Esophagus squamous epithelium (tissue), 5 donors: ENCODE measurements at regions of chr13 and their contacts with region 1.

Region 1: GRCh38 chr13:102580552-102581169 is 16.1 kb upstream of the TPP2 start:
- DNase-seq: no peak
- H3K4me3 ChIP-seq: no peak overlapping the region
- H3K27ac ChIP-seq: no peak overlapping the region
- H3K4me1 ChIP-seq: no peaks in the 10 kb centered on the region
- H3K27me3 ChIP-seq: peaks cover 0 to 13% (median 0%) of the 10 kb centered on the region in 4 donors
- CTCF ChIP-seq: peak; percentile 50 to 76 (median 68)
- POLR2A ChIP-seq: no peak

Region 2: DNA sequence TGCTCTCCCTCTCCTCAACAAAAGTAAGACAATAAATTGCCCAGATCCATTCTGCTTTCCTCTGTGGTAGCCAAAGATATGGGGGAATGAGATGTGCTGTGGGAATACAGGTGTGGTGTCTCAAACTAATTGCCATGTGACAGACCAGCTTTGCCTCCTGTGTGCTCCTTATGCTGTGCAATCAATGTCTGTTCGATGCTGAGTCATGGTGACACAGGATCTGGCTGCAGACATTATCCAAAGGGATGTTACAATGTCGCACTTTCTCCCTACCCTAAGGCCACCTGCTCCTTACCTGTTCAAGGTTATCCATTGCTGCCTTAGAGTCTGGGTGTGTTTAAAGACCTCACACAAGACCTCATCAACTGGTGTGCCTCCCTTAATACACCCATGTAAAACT is 211.4 kb before region 1 on chr13:
- intact Hi-C with region 1: no loop called
- DNase-seq: no peak
- H3K4me3 ChIP-seq: no peak overlapping the region
- H3K27ac ChIP-seq: peak overlapping the region in 1 of 4 donors; percentile 7
- H3K4me1 ChIP-seq: peaks cover 0 to 7% (median 0%) of the 10 kb centered on the region in 3 donors
- H3K27me3 ChIP-seq: no peaks in the 10 kb centered on the region
- CTCF ChIP-seq: no peak
- POLR2A ChIP-seq: no peak

Region 3: GRCh38 chr13:102845630-102846260 is 265.1 kb after region 1 on chr13 and contains the start of gene ERCC5:
- intact Hi-C with region 1: loop called (anchors 5 kb)
- DNase-seq: peak; percentile 66
- H3K4me3 ChIP-seq: peak within 1 kb of the TSS; percentile 88 to 99 (median 92)
- H3K27ac ChIP-seq: peak within 1 kb of the TSS; percentile 93 to 99 (median 96)
- H3K4me1 ChIP-seq: peaks cover 10 to 41% (median 10%) of the 10 kb centered on the region in 3 donors
- H3K27me3 ChIP-seq: no peaks in the 10 kb centered on the region
- CTCF ChIP-seq: peak in 4 of 6 experiments; percentile 9 to 37 (median 16)
- POLR2A ChIP-seq: peak in 3 of 4 donors; percentile 45 to 87 (median 77)
- total RNA-seq, gene ERCC5: 34.9 to 70.1 (median 48.3) TPM